ENCODE measurements at regions of chr2 and their contacts with region 1.

Region 1: DNA sequence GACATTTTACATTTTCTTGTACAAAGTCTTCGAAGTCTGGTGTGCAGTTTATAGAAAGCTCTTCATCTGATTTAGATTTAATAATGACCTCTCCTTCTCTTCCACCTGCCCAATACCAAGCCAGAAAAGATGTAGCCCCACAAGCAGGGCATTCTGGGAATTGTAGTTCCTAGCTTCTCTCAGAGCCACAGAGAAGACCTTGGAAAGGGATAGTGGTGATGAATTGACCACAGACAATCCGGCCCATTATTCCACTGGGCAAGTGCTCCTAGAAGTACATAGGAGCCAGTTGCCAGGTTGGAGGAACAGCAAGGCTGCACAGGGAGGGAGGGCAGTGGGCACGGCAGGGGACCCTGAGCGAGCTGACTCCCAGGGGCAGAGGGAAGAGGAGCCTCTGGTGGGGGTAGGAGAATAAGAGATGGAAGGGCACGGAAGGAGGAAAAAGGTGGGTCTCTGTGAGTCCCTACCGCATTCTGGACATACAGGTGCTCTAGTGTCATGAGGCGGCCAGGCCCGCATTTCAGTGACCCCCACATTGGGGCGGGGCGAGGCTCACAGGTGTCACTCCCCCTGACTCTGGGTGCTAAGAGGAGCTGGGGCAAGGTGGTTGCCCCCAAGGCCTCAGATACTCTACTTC is 152.5 kb upstream of the HAAO start:
- DNase-seq: no peak
- ATAC-seq: no peak
- H3K4me3 ChIP-seq: no peak overlapping the region
- H3K4me3 Mint-ChIP-seq: no peak overlapping the region
- H3K27ac ChIP-seq: no peak overlapping the region
- H3K27ac Mint-ChIP-seq: no peak overlapping the region
- H3K4me1 ChIP-seq: peaks cover 30 to 33% of the 10 kb centered on the region in 2 donors
- H3K4me1 Mint-ChIP-seq: peaks cover 33% of the 10 kb centered on the region
- H3K27me3 ChIP-seq: no peaks in the 10 kb centered on the region
- H3K27me3 Mint-ChIP-seq: no peaks in the 10 kb centered on the region
- CTCF ChIP-seq: no peak

Region 2: DNA sequence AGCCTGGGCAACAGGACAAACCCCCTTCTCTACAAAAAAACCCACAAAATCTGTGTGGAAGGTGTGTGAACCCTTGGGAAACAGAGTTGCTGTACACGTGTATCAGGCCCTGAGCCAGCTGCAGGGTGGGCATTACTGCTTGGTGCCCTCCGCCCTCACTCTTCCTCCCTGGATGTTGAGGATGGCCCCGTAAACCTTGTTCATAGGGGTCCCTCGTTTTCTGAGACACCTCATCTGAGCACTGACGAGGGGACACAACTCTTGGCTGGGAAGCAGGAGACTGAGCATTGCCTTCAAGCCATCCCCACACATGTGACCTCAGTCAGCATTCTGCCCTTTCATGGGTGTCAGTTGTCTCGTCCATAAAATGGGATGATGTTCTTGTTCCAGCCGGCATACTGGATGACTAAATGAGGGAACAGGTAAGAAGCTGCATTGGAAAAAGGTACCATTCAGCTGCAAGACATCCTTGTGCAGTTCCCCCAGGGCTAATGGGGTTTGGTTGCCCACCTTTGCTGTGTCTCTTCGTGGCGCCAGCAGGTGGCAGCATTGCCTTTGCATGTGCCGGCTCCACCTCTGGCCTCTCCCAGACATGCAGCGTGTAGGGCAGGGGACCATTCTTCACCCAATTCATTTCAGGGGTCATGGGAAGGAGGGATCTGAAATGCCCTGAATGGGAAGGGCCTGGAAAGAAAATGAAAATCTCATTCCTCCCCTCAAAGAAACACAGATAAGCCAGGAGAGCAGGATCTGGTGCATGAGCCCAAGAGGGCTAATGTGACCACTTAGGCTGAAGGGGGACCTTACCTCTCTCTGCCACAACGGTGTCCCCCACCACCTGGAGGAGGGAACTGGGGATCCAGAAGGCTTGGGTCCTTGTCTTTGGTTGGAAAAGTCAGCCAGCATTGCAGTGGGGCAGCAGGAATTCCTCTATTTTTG is 116.1 kb before region 1 on chr2:
- CTCF ChIA-PET with region 1: interaction called, 16 read pairs
- POLR2A ChIA-PET with region 1: interaction called, 6 read pairs
- intact Hi-C with region 1: loop called (anchors 5 kb)
- DNase-seq: peak; percentile 82
- ATAC-seq: peak; percentile 95
- H3K4me3 ChIP-seq: no peak overlapping the region
- H3K4me3 Mint-ChIP-seq: peak overlapping the region; percentile 39
- H3K27ac ChIP-seq: no peak overlapping the region
- H3K27ac Mint-ChIP-seq: peak overlapping the region; percentile 26
- H3K4me1 ChIP-seq: peaks cover 8 to 13% of the 10 kb centered on the region in 2 donors
- H3K4me1 Mint-ChIP-seq: peaks cover 16% of the 10 kb centered on the region
- H3K27me3 ChIP-seq: no peaks in the 10 kb centered on the region
- H3K27me3 Mint-ChIP-seq: peaks cover 3% of the 10 kb centered on the region
- CTCF ChIP-seq: peak; percentile 92

Region 3: DNA sequence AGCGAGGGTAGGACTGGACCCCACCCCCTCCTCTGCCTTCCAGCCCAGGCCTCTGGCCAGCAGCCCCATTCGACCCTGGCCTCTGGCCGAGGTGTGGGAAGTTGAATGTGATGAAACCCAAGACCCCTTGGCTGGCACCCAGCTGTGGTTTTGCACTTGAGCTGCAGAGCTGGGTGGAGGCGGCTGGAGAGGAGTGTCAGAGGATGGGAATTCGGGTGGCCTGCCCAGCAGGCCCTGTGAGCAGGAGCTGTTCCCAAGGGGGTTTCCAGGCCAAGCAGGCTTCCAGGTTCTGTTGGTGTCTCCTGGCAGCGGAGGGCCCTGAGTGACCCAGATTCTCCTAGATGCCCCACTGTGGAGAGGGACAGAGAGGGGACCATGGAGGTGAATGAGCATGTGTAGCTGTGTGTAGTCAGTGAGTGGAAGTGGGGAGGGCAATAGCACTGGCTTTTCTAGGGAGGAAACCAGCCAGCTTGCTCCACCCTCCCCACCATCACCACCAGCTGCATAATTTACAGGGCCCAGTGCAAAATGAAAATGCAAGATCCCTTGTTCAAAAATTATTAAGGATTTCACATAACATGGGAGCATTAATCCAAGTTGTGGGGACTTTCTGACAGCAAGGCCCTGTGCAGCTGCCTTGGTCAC is 19.7 kb after region 1 on chr2:
- CTCF ChIA-PET with region 1: interaction called, 27 read pairs
- POLR2A ChIA-PET with region 1: no interaction called
- intact Hi-C with region 1: no loop called
- DNase-seq: no peak
- ATAC-seq: no peak
- H3K4me3 ChIP-seq: no peak overlapping the region
- H3K4me3 Mint-ChIP-seq: no peak overlapping the region
- H3K27ac ChIP-seq: no peak overlapping the region
- H3K27ac Mint-ChIP-seq: no peak overlapping the region
- H3K4me1 ChIP-seq: peaks cover 41 to 46% of the 10 kb centered on the region in 2 donors
- H3K4me1 Mint-ChIP-seq: peaks cover 30% of the 10 kb centered on the region
- H3K27me3 ChIP-seq: peaks cover 0 to 7% (median 0%) of the 10 kb centered on the region in 4 experiments
- H3K27me3 Mint-ChIP-seq: peaks cover 8% of the 10 kb centered on the region
- CTCF ChIP-seq: no peak

Region 4: GRCh38 chr2:43024515-43025011 is 79.7 kb after region 1 on chr2:
- CTCF ChIA-PET with region 1: interaction called, 13 read pairs
- POLR2A ChIA-PET with region 1: no interaction called
- intact Hi-C with region 1: no loop called
- DNase-seq: peak; percentile 60
- ATAC-seq: peak; percentile 75
- H3K4me3 ChIP-seq: no peak overlapping the region
- H3K4me3 Mint-ChIP-seq: no peak overlapping the region
- H3K27ac ChIP-seq: no peak overlapping the region
- H3K27ac Mint-ChIP-seq: no peak overlapping the region
- H3K4me1 ChIP-seq: peaks cover 7 to 8% of the 10 kb centered on the region in 2 donors
- H3K4me1 Mint-ChIP-seq: peaks cover 10% of the 10 kb centered on the region
- H3K27me3 ChIP-seq: no peaks in the 10 kb centered on the region
- H3K27me3 Mint-ChIP-seq: no peaks in the 10 kb centered on the region
- CTCF ChIP-seq: peak; percentile 55

Region 5: GRCh38 chr2:43131024-43131889 is 186.4 kb after region 1 on chr2:
- CTCF ChIA-PET with region 1: interaction called, 62 read pairs
- POLR2A ChIA-PET with region 1: interaction called, 4 read pairs
- intact Hi-C with region 1: loop called (anchors 1 kb)
- DNase-seq: peak; percentile 90
- ATAC-seq: peak; percentile 54
- H3K4me3 ChIP-seq: peak overlapping the region in 1 of 5 experiments; percentile 19
- H3K4me3 Mint-ChIP-seq: peak overlapping the region; percentile 55
- H3K27ac ChIP-seq: peak overlapping the region; percentile 87 to 89
- H3K27ac Mint-ChIP-seq: peak overlapping the region; percentile 83
- H3K4me1 ChIP-seq: peaks cover 89 to 100% of the 10 kb centered on the region in 2 donors
- H3K4me1 Mint-ChIP-seq: peaks cover 92% of the 10 kb centered on the region
- H3K27me3 ChIP-seq: peaks cover 0 to 2% (median 0%) of the 10 kb centered on the region in 4 experiments
- H3K27me3 Mint-ChIP-seq: no peaks in the 10 kb centered on the region
- CTCF ChIP-seq: peak; percentile 69

Region 6: DNA sequence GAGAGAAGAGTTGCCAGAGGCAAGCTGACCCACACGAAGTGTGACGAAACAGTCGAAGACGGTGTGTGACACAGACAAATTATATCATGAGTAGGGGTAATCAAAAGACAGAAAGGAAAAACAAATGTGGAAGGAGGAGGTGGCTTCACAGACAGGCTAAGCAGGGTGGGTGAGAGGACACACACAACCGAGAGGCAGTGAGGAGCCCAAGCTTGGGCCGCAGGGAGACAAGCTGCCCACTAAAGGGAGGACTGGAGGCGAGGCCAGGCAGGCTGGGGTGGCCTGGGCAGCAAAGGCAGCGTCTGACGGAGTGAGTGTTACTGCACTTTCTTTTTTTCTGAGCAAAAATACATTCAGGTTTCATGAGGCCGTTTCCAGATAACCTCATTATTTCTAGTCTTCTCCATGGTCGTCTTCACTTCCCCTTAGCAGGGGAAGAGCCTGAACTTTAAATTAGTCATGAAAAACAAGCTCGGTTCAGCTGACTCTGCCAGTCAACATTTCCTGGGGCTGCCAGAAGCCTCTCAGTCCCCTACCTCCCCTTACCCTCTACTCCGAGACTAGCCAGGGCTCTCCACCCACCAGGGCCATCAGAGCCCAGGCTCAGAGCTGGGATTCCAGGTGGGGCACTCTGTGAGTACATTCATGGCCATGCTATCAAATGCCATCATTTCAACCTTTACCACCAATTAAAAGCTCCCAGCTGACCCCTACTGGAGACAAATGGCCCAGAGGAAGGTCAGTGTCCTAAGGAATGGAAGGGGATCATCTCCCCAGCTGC is 295.3 kb after region 1 on chr2:
- CTCF ChIA-PET with region 1: interaction called, 28 read pairs
- POLR2A ChIA-PET with region 1: interaction called, 4 read pairs
- intact Hi-C with region 1: no loop called
- DNase-seq: peak; percentile 59
- ATAC-seq: peak; percentile 87
- H3K4me3 ChIP-seq: peak overlapping the region in 1 of 5 experiments; percentile 17
- H3K4me3 Mint-ChIP-seq: peak overlapping the region; percentile 67
- H3K27ac ChIP-seq: peak overlapping the region; percentile 63 to 89
- H3K27ac Mint-ChIP-seq: peak overlapping the region; percentile 97
- H3K4me1 ChIP-seq: peaks cover 26 to 37% of the 10 kb centered on the region in 2 donors
- H3K4me1 Mint-ChIP-seq: peaks cover 48% of the 10 kb centered on the region
- H3K27me3 ChIP-seq: no peaks in the 10 kb centered on the region
- H3K27me3 Mint-ChIP-seq: no peaks in the 10 kb centered on the region
- CTCF ChIP-seq: no peak

Region 7: GRCh38 chr2:43542285-43542937 is 597.5 kb after region 1 on chr2:
- CTCF ChIA-PET with region 1: interaction called, 50 read pairs
- POLR2A ChIA-PET with region 1: no interaction called
- intact Hi-C with region 1: loop called (anchors 1 kb)
- DNase-seq: peak; percentile 67
- ATAC-seq: peak; percentile 49
- H3K4me3 ChIP-seq: no peak overlapping the region
- H3K4me3 Mint-ChIP-seq: no peak overlapping the region
- H3K27ac ChIP-seq: no peak overlapping the region
- H3K27ac Mint-ChIP-seq: no peak overlapping the region
- H3K4me1 ChIP-seq: peaks cover 12% of the 10 kb centered on the region in 2 donors
- H3K4me1 Mint-ChIP-seq: peaks cover 13% of the 10 kb centered on the region
- H3K27me3 ChIP-seq: no peaks in the 10 kb centered on the region
- H3K27me3 Mint-ChIP-seq: no peaks in the 10 kb centered on the region
- CTCF ChIP-seq: peak; percentile 84